GM12878 (cell line): ENCODE measurements at regions of chr9 and their contacts with region 1.

Region 1: DNA sequence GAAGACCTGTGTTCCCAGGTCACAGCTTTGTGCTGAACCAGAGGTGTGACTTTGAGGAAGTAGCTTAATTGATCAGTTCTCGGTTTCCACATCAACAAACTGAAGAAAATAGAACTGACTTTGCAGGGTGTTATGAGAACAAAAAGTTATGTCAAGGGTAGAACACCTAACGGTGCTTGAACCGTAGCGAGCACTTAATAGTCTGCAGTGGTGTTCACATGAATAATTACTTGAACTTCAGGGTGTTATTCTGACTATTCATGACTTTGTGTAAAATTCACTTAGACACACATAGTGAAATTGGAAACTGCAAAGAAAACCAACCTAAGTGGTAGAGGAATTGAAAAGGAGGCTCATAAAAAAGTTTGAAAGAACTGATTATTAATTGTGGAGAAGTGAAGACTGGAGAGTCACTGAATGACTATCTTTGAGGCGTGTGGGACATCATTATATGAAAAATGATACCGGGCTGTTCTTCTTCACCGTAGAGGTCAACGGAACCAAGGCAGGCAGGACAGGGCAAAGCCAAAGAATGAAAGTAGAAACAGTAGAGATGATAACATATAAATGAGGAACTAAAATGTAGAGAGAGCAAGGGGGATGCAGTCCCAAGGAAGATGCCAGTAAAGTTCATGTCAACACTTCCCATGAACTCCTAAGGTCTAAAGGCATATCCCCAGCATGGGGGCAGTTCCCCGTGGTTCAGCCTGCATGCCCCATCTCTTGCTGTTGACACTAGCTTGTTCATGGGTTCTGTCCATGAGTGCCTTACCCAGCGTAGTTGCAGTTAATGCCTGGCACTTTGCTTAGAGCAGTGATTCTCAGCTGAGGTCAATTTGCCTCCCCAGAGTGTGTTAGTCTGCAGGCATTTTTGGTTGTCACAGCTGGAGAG is 118.7 kb downstream of the ZNF462 start:
- DNase-seq: peak; percentile 83
- ATAC-seq: peak; percentile 85
- H3K4me3 ChIP-seq: no peak overlapping the region
- H3K27ac ChIP-seq: peak overlapping the region; percentile 28; the same call in 1 of the 2 replicates
- H3K4me1 ChIP-seq: peaks cover 21% of the 10 kb centered on the region
- H3K27me3 ChIP-seq: no peaks in the 10 kb centered on the region; a peak in 1 of 4 replicates
- CTCF ChIP-seq: no peak
- EP300 ChIP-seq: peak; percentile 53 to 80; a peak in 3 of 4 replicates
- POLR2A ChIP-seq: no peak
- RAD21 ChIP-seq: no peak

Region 2: DNA sequence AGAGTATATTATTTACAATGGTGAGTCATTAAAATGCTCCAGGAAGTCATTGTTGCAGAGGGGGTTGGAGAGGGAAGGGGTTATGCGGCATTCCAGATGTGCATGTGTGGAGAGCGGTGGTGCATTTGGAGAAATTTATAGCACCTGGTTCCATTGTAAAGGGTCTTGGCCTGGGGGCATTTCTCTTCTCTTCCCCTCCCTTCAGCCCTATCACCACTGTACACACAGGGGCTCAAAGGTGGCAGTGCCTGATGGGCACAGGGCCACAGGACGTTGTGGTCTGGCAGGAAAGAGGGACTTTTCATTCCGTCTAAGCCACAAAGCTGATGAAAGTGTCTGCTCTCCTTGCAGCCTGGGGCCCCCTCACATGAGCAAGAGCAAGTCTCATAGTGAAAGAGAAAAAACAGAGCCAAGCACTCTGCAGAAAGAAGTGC is 561.1 kb before region 1 on chr9:
- CTCF ChIA-PET with region 1: no interaction called
- POLR2A ChIA-PET with region 1: no interaction called
- RAD21 ChIA-PET with region 1: no interaction called
- SMC1A ChIA-PET with region 1: interaction called, 5 read pairs
- in situ Hi-C with region 1: no loop called
- intact Hi-C with region 1: loop called (anchors 5 kb)
- DNase-seq: peak; percentile 76
- ATAC-seq: peak; percentile 76
- H3K4me3 ChIP-seq: no peak overlapping the region
- H3K27ac ChIP-seq: no peak overlapping the region
- H3K4me1 ChIP-seq: peaks cover 17% of the 10 kb centered on the region
- H3K27me3 ChIP-seq: no peaks in the 10 kb centered on the region
- CTCF ChIP-seq: no peak
- EP300 ChIP-seq: peak; percentile 20 to 68; a peak in 2 of 4 replicates
- POLR2A ChIP-seq: no peak
- RAD21 ChIP-seq: no peak

Region 3: GRCh38 chr9:106869458-106869857 is 112.2 kb before region 1 on chr9:
- CTCF ChIA-PET with region 1: interaction called, 26 read pairs
- POLR2A ChIA-PET with region 1: interaction called, 8 read pairs
- RAD21 ChIA-PET with region 1: interaction called, 80 read pairs
- SMC1A ChIA-PET with region 1: interaction called, 65 read pairs
- in situ Hi-C with region 1: no loop called
- intact Hi-C with region 1: loop called (anchors 1 kb)
- DNase-seq: no peak
- ATAC-seq: no peak
- H3K4me3 ChIP-seq: no peak overlapping the region
- H3K27ac ChIP-seq: no peak overlapping the region
- H3K4me1 ChIP-seq: no peaks in the 10 kb centered on the region
- H3K27me3 ChIP-seq: no peaks in the 10 kb centered on the region
- CTCF ChIP-seq: no peak
- EP300 ChIP-seq: no peak
- POLR2A ChIP-seq: no peak
- RAD21 ChIP-seq: no peak

Region 4: GRCh38 chr9:106964329-106964728 is 17.3 kb before region 1 on chr9:
- CTCF ChIA-PET with region 1: interaction called, 11 read pairs
- POLR2A ChIA-PET with region 1: interaction called, 12 read pairs
- RAD21 ChIA-PET with region 1: interaction called, 19 read pairs
- SMC1A ChIA-PET with region 1: interaction called, 45 read pairs
- in situ Hi-C with region 1: no loop called
- intact Hi-C with region 1: loop called (anchors 2 kb)
- DNase-seq: peak; percentile 44
- ATAC-seq: peak; percentile 96
- H3K4me3 ChIP-seq: no peak overlapping the region
- H3K27ac ChIP-seq: no peak overlapping the region
- H3K4me1 ChIP-seq: no peaks in the 10 kb centered on the region
- H3K27me3 ChIP-seq: no peaks in the 10 kb centered on the region
- CTCF ChIP-seq: no peak
- EP300 ChIP-seq: peak in 1 of 2 experiments; percentile 86; a peak in 3 of 4 replicates
- POLR2A ChIP-seq: no peak
- RAD21 ChIP-seq: no peak

Region 5: DNA sequence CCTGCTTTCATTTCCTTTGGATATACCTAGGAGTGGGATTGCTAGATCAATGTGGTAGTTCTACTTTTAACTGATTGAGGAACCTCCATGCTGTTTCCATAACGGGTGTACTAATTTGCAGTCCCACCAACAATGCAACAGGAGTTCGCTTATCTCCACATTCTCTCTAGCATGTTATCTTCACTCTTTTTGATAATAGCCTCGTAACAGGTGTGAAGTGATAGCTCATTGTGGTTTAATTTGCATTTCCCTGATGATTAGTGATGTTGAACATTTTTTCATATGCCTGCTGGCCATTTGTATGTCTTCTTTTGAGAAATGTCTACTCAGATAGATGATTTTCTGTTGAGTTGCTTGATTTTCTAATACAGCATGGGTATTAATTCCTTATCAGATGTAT is 23.6 kb after region 1 on chr9:
- CTCF ChIA-PET with region 1: interaction called, 4 read pairs
- POLR2A ChIA-PET with region 1: no interaction called
- RAD21 ChIA-PET with region 1: interaction called, 3 read pairs
- SMC1A ChIA-PET with region 1: interaction called, 13 read pairs
- in situ Hi-C with region 1: no loop called
- intact Hi-C with region 1: no loop called
- DNase-seq: no peak
- ATAC-seq: peak; percentile 65
- H3K4me3 ChIP-seq: no peak overlapping the region
- H3K27ac ChIP-seq: no peak overlapping the region
- H3K4me1 ChIP-seq: no peaks in the 10 kb centered on the region
- H3K27me3 ChIP-seq: no peaks in the 10 kb centered on the region
- CTCF ChIP-seq: no peak
- EP300 ChIP-seq: no peak
- POLR2A ChIP-seq: no peak
- RAD21 ChIP-seq: no peak

Region 6: GRCh38 chr9:107039542-107039941 is 57.9 kb after region 1 on chr9:
- CTCF ChIA-PET with region 1: interaction called, 9 read pairs
- POLR2A ChIA-PET with region 1: interaction called, 3 read pairs
- RAD21 ChIA-PET with region 1: interaction called, 26 read pairs
- SMC1A ChIA-PET with region 1: interaction called, 14 read pairs
- in situ Hi-C with region 1: no loop called
- intact Hi-C with region 1: loop called (anchors 2 kb)
- DNase-seq: peak; percentile 74
- ATAC-seq: peak; percentile 69
- H3K4me3 ChIP-seq: no peak overlapping the region
- H3K27ac ChIP-seq: no peak overlapping the region
- H3K4me1 ChIP-seq: no peaks in the 10 kb centered on the region
- H3K27me3 ChIP-seq: no peaks in the 10 kb centered on the region
- CTCF ChIP-seq: no peak
- EP300 ChIP-seq: peak in 1 of 2 experiments; percentile 62; a peak in 1 of 4 replicates
- POLR2A ChIP-seq: no peak
- RAD21 ChIP-seq: no peak

Region 7: DNA sequence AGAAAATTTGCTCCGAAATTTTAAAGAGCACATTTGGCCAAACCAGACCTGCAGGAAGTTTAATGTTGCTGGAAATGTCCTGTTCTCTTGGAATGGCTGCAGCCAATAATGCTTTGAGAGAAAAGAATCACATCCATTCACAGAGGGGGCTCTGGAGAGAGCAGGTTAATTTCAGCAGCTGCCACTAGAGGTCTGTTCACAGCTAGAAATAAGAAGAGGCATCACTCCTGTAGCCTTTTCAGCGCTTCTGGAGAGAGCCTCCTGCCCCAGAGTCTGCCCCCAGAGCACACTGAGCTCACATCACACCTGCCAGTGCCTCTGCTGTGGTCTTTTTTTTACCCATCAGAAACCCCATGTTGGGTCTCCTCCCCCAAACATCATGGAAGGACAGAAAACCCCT is 176.7 kb after region 1 on chr9:
- CTCF ChIA-PET with region 1: interaction called, 11 read pairs
- POLR2A ChIA-PET with region 1: no interaction called
- RAD21 ChIA-PET with region 1: interaction called, 7 read pairs
- SMC1A ChIA-PET with region 1: interaction called, 4 read pairs
- in situ Hi-C with region 1: no loop called
- intact Hi-C with region 1: no loop called
- DNase-seq: no peak
- ATAC-seq: peak; percentile 99
- H3K4me3 ChIP-seq: no peak overlapping the region
- H3K27ac ChIP-seq: no peak overlapping the region
- H3K4me1 ChIP-seq: no peaks in the 10 kb centered on the region
- H3K27me3 ChIP-seq: peaks cover 0 to 3% of the 10 kb centered on the region in 2 experiments; a peak in 1 of 4 replicates
- CTCF ChIP-seq: peak; percentile 41 to 62 (median 56); a peak in 5 of 6 replicates
- EP300 ChIP-seq: no peak
- POLR2A ChIP-seq: no peak
- RAD21 ChIP-seq: peak; percentile 45

Region 8: GRCh38 chr9:107299437-107299836 is 317.8 kb after region 1 on chr9:
- CTCF ChIA-PET with region 1: no interaction called
- POLR2A ChIA-PET with region 1: no interaction called
- RAD21 ChIA-PET with region 1: no interaction called
- SMC1A ChIA-PET with region 1: no interaction called
- in situ Hi-C with region 1: no loop called
- intact Hi-C with region 1: no loop called
- DNase-seq: no peak
- ATAC-seq: peak; percentile 20; the same call in 2 of the 3 replicates
- H3K4me3 ChIP-seq: no peak overlapping the region
- H3K27ac ChIP-seq: no peak overlapping the region
- H3K4me1 ChIP-seq: 0 out of 2 replicates have a peak, but pooled peaks cover 1% of the 10 kb centered on the region
- H3K27me3 ChIP-seq: no peaks in the 10 kb centered on the region
- CTCF ChIP-seq: no peak
- EP300 ChIP-seq: no peak
- POLR2A ChIP-seq: no peak
- RAD21 ChIP-seq: no peak